CD4-positive, alpha-beta memory T cell (primary cell): ENCODE measurements at regions of chr11 and their contacts with region 1.

Region 1: DNA sequence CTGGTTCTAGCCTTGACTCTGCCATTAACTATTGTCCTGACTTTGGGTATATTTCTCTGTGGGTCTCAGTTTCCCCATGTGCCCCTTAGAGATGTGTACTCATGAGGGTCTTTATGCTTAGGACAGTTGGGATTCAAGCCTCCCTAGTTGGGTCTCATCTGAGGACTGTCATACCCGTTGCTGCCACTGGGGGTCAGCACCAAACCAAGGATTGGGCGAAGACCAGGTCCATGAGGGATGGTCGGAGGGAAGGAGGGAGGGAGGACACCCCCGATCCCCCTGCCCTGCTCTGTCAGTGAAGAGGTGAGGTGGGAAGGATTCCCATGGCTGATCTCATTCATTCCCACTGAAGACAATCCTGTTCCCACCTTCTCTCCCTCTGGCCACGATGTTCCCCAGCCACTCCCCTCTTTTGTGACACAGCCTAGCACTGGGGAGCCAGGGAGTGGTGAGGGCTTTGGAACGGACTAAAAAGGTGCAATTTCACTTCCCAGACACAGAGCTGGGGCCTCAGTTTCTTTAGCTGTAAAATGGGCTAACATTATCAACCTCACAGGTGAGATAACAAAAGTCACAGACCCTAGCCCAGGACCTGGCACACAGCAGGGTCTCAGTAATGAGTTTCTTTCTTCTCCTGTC is 12.4 kb upstream of the KLHL35 start:
- DNase-seq: peak; percentile 54 to 72 (median 63)
- H3K4me3 ChIP-seq: no peak overlapping the region
- H3K4me3 Mint-ChIP-seq: no peak overlapping the region
- H3K27ac ChIP-seq: no peak overlapping the region
- H3K27ac Mint-ChIP-seq: peak overlapping the region in 3 of 7 donors; percentile 29 to 45 (median 29)
- H3K4me1 ChIP-seq: peaks cover 5% of the 10 kb centered on the region
- H3K4me1 Mint-ChIP-seq: peaks cover 0 to 7% (median 3%) of the 10 kb centered on the region in 4 donors
- H3K27me3 ChIP-seq: no peaks in the 10 kb centered on the region
- H3K27me3 Mint-ChIP-seq: no peaks in the 10 kb centered on the region

Region 2: GRCh38 chr11:75406338-75406777 is 39.1 kb before region 1 on chr11:
- CTCF ChIA-PET with region 1: interaction called, 11 read pairs
- POLR2A ChIA-PET with region 1: interaction called, 4 read pairs
- intact Hi-C with region 1: no loop called
- DNase-seq: no peak
- H3K4me3 ChIP-seq: no peak overlapping the region
- H3K4me3 Mint-ChIP-seq: no peak overlapping the region
- H3K27ac ChIP-seq: no peak overlapping the region
- H3K27ac Mint-ChIP-seq: peak overlapping the region in 2 of 7 donors; percentile 42 to 68
- H3K4me1 ChIP-seq: peaks cover 36% of the 10 kb centered on the region
- H3K4me1 Mint-ChIP-seq: peaks cover 30 to 53% (median 36%) of the 10 kb centered on the region in 4 donors
- H3K27me3 ChIP-seq: no peaks in the 10 kb centered on the region
- H3K27me3 Mint-ChIP-seq: no peaks in the 10 kb centered on the region

Region 3: DNA sequence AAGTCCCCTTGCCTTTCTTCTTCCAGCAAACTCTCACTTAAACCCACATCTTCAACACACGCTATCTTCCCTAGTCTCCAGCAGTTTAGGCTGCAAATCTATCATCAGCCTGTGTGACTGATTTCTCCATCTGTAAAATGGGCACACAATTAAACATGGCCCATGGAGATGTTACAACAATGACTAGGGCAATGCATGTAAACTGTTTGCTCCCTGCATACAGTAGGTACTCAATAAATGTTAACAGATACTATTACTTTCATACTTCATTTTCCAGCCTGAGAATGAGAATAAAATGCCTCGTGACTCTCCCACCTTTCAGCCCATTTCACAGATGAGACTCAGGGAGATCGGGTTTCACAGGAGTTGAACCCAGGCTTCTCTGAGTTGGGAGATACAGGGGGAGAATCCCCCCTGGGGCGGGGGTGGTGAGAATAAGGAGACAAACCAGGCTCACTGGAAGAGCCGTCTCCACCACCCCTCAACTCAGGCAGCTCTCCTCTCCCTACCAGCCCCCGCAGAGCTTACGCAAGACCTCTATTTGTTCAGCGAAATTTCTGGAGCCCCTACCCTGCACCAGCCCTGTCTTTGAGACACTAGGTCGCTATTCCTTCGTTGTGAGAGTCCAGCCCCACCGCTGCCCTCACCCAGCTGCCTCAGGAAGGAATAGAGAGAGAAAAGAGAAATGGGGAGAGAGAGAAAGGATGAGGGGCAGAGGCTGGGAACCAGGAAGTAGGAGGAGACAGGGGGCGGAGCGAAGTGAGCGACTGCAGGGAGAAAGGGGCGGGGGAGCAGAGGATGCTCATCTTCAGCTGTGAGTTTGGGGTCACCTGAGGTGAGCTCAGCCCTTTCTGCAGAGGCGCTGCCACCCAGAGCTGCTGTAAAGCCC is 29.7 kb after region 1 on chr11:
- CTCF ChIA-PET with region 1: interaction called, 11 read pairs
- POLR2A ChIA-PET with region 1: interaction called, 3 read pairs
- intact Hi-C with region 1: no loop called
- DNase-seq: peak; percentile 41 to 69 (median 46)
- H3K4me3 ChIP-seq: no peak overlapping the region
- H3K4me3 Mint-ChIP-seq: peak overlapping the region in 7 of 8 donors; percentile 26 to 74 (median 52)
- H3K27ac ChIP-seq: peak overlapping the region; percentile 22
- H3K27ac Mint-ChIP-seq: peak overlapping the region; percentile 86 to 94 (median 90)
- H3K4me1 ChIP-seq: peaks cover 24% of the 10 kb centered on the region
- H3K4me1 Mint-ChIP-seq: peaks cover 17 to 23% (median 23%) of the 10 kb centered on the region in 4 donors
- H3K27me3 ChIP-seq: no peaks in the 10 kb centered on the region
- H3K27me3 Mint-ChIP-seq: no peaks in the 10 kb centered on the region

Region 4: DNA sequence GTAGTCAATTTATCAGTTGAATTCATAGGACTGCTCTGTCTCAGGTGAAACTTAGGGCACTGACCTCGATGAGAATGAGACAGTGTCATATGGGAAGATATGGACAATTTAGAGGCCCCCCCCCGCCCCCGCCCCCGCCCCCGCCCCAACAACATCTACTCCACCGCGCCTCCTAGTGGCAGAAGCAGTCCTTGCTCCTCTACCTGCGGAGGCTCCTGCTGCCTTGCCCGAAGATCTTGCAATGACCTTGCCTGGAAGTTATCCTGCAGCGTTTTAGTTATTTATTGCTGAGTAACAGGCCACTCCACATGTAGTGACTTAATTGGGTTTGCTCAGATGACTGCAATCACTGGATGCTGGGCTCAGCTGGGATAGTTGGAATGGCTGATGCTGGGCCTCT is 131.8 kb after region 1 on chr11:
- CTCF ChIA-PET with region 1: interaction called, 28 read pairs
- POLR2A ChIA-PET with region 1: no interaction called
- intact Hi-C with region 1: loop called (anchors 2 kb)
- DNase-seq: peak; percentile 37 to 60 (median 48)
- H3K4me3 ChIP-seq: no peak overlapping the region
- H3K4me3 Mint-ChIP-seq: no peak overlapping the region
- H3K27ac ChIP-seq: no peak overlapping the region
- H3K27ac Mint-ChIP-seq: no peak overlapping the region
- H3K4me1 ChIP-seq: peaks cover 2% of the 10 kb centered on the region
- H3K4me1 Mint-ChIP-seq: peaks cover 2 to 4% (median 2%) of the 10 kb centered on the region in 4 donors
- H3K27me3 ChIP-seq: no peaks in the 10 kb centered on the region
- H3K27me3 Mint-ChIP-seq: peaks cover 0 to 2% of the 10 kb centered on the region in 2 donors

Region 5: GRCh38 chr11:76501526-76502210 is 1056.2 kb after region 1 on chr11:
- CTCF ChIA-PET with region 1: no interaction called
- POLR2A ChIA-PET with region 1: no interaction called
- intact Hi-C with region 1: no loop called
- DNase-seq: no peak
- H3K4me3 ChIP-seq: no peak overlapping the region
- H3K4me3 Mint-ChIP-seq: no peak overlapping the region
- H3K27ac ChIP-seq: no peak overlapping the region
- H3K27ac Mint-ChIP-seq: no peak overlapping the region
- H3K4me1 ChIP-seq: no peaks in the 10 kb centered on the region
- H3K4me1 Mint-ChIP-seq: peaks cover 0 to 4% (median under 1%) of the 10 kb centered on the region in 4 donors
- H3K27me3 ChIP-seq: no peaks in the 10 kb centered on the region
- H3K27me3 Mint-ChIP-seq: no peaks in the 10 kb centered on the region